Prostate gland (tissue), 2 donors: ENCODE measurements at regions of chr3 and their contacts with region 1.

Region 1: GRCh38 chr3:15205934-15206661 is at the start of gene CAPN7:
- DNase-seq: peak; percentile 93
- H3K4me3 ChIP-seq: peak within 1 kb of the TSS; percentile 59 to 83
- H3K27ac ChIP-seq: peak within 1 kb of the TSS; percentile 85 to 93
- H3K4me1 ChIP-seq: no peaks in the 10 kb centered on the region
- H3K27me3 ChIP-seq: no peaks in the 10 kb centered on the region
- CTCF ChIP-seq: peak in 2 of 4 experiments; percentile 49 to 62
- POLR2A ChIP-seq: peak; percentile 83
- total RNA-seq, gene CAPN7: 45.1 to 46.7 TPM

Region 2: DNA sequence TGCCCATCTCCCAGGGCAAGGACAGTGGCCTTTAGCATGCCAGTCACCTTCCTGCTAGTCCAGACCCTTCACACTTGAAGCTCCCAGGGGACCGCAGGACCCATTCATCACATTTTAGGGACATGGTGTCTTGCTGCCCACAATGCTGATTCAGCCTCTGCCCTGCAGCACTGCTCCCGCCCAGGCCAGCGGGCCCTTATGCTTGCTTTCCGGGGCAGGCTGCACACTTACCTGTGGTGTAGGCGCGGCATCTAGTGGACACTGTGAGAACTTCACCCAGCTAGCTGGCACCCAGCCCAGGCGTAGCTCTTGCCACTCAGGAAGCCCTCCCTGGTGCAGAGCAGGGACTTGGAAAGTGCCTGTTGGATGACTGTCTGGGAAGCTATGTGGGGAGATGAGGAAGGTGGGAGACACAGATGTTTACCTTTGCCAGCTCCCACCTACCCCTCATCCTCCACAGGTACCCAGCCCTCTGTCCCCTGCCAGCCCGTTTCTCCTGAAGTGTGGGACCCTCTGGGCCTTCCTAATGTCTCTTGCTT is 285.0 kb before region 1 on chr3:
- intact Hi-C with region 1: loop called (anchors 10 kb)
- DNase-seq: peak; percentile 79
- H3K4me3 ChIP-seq: no peak overlapping the region
- H3K27ac ChIP-seq: no peak overlapping the region
- H3K4me1 ChIP-seq: no peaks in the 10 kb centered on the region
- H3K27me3 ChIP-seq: no peaks in the 10 kb centered on the region
- CTCF ChIP-seq: peak; percentile 94 to 99 (median 96)
- POLR2A ChIP-seq: no peak

Region 3: DNA sequence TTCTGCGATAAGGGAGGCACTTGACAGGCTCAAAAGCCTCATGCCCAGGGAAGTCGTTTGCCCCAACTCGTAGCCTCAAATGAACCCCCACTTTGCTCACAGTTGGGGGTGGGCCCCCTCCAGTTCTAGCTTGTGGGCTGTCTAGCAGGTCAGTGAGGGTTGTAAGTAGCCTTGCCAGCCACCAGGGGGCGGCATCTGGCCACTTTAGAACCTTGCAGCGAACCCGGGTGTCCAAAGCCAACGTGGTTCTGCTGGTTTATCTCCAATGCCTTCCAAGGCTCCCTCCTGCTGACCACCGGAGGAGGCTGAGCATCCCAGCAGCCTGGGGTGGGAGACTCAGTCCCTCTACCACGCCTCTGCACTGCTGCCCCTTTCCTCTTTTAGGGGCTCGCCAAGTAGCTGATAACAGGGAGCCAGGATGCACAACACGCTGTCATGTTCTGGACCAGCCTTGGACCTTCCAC is 98.0 kb before region 1 on chr3:
- intact Hi-C with region 1: loop called (anchors 5 kb)
- DNase-seq: peak; percentile 59
- H3K4me3 ChIP-seq: no peak overlapping the region
- H3K27ac ChIP-seq: no peak overlapping the region
- H3K4me1 ChIP-seq: no peaks in the 10 kb centered on the region
- H3K27me3 ChIP-seq: no peaks in the 10 kb centered on the region
- CTCF ChIP-seq: peak; percentile 70 to 80 (median 78)
- POLR2A ChIP-seq: no peak

Region 4: GRCh38 chr3:15268033-15268631 is 62.0 kb after region 1 on chr3:
- intact Hi-C with region 1: loop called (anchors 5 kb)
- DNase-seq: peak; percentile 77
- H3K4me3 ChIP-seq: no peak overlapping the region
- H3K27ac ChIP-seq: no peak overlapping the region
- H3K4me1 ChIP-seq: no peaks in the 10 kb centered on the region
- H3K27me3 ChIP-seq: no peaks in the 10 kb centered on the region
- CTCF ChIP-seq: peak; percentile 90 to 94 (median 94)
- POLR2A ChIP-seq: no peak

Region 5: GRCh38 chr3:15361494-15362212 is 155.6 kb after region 1 on chr3:
- intact Hi-C with region 1: no loop called
- DNase-seq: no peak
- H3K4me3 ChIP-seq: no peak overlapping the region
- H3K27ac ChIP-seq: no peak overlapping the region
- H3K4me1 ChIP-seq: no peaks in the 10 kb centered on the region
- H3K27me3 ChIP-seq: no peaks in the 10 kb centered on the region
- CTCF ChIP-seq: no peak
- POLR2A ChIP-seq: no peak

Region 6: GRCh38 chr3:15377961-15378791 is 172.1 kb after region 1 on chr3:
- intact Hi-C with region 1: loop called (anchors 5 kb)
- DNase-seq: peak; percentile 84
- H3K4me3 ChIP-seq: no peak overlapping the region
- H3K27ac ChIP-seq: peak overlapping the region in 1 of 2 donors; percentile 32
- H3K4me1 ChIP-seq: no peaks in the 10 kb centered on the region
- H3K27me3 ChIP-seq: no peaks in the 10 kb centered on the region
- CTCF ChIP-seq: peak; percentile 82 to 96 (median 92)
- POLR2A ChIP-seq: no peak

Region 7: GRCh38 chr3:15405448-15406050 is 199.5 kb after region 1 on chr3:
- intact Hi-C with region 1: loop called (anchors 10 kb)
- DNase-seq: peak; percentile 18
- H3K4me3 ChIP-seq: no peak overlapping the region
- H3K27ac ChIP-seq: no peak overlapping the region
- H3K4me1 ChIP-seq: no peaks in the 10 kb centered on the region
- H3K27me3 ChIP-seq: no peaks in the 10 kb centered on the region
- CTCF ChIP-seq: peak in 3 of 4 experiments; percentile 53 to 60 (median 58)
- POLR2A ChIP-seq: no peak

Region 8: GRCh38 chr3:15557511-15557946 is 351.4 kb after region 1 on chr3:
- intact Hi-C with region 1: loop called (anchors 5 kb)
- DNase-seq: peak; percentile 24
- H3K4me3 ChIP-seq: no peak overlapping the region
- H3K27ac ChIP-seq: no peak overlapping the region
- H3K4me1 ChIP-seq: no peaks in the 10 kb centered on the region
- H3K27me3 ChIP-seq: no peaks in the 10 kb centered on the region
- CTCF ChIP-seq: peak in 3 of 4 experiments; percentile 39 to 62 (median 55)
- POLR2A ChIP-seq: no peak